ENCODE measurements at regions of chr18 and their contacts with region 1.

Region 1: GRCh38 chr18:70205421-70206397 is at the start of gene RTTN:
- DNase-seq: peak; percentile 88
- H3K4me3 ChIP-seq: peak within 1 kb of the TSS; percentile 82
- H3K27ac ChIP-seq: peak within 1 kb of the TSS; percentile 77
- H3K4me1 ChIP-seq: peaks cover 12% of the 10 kb centered on the region
- CTCF ChIP-seq: no peak
- total RNA-seq, gene RTTN: 20.5 and 29.7 TPM in 2 replicates

Region 2: DNA sequence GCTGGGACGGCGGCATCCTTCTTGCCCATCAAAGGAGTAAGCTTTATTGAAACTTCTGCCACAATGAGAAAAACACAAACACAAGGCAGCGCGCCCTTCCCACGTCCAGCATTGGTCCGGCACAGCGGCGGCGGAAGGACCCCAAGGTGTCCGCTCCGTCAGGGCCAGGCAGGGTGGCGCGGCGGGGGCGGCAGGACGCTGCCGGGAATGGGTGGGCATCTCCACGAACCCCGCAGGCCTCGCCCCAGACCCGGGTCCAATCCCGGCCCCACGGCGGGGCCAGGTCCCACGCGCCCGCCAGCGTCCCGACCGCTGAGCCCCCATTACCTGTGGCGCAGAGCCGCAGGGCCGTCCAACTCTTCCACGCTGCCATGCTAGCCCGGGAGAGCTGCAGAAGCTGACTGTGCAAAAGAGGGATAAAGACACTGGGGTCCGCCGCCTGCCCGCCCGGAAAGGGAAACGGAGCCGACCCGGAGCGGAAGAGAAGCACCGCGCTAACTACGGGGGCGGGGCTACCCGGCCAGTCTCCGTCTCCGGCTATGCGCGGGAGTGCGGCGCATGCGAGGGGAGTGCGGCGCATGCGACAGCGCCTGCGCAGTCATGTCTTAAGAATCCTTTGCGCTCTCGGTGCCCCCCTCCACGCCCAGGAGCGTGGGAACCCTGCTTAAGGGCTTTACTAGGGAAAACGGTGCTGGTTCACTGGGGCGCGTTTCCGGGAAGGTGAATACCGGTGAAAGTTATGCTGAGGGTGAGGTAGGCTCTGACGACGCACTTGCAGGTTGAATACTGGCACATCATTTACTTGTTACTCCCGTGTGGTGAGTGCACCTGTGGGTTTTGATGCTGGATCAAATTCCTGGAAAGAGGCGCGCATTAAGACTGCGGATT is 1490.9 kb before region 1 on chr18 and contains the start of gene TMX3:
- CTCF ChIA-PET with region 1: no interaction called
- POLR2A ChIA-PET with region 1: no interaction called
- intact Hi-C with region 1: loop called (anchors 10 kb)
- DNase-seq: peak; percentile 86
- H3K4me3 ChIP-seq: peak within 1 kb of the TSS; percentile 90
- H3K27ac ChIP-seq: peak within 1 kb of the TSS; percentile 43
- H3K4me1 ChIP-seq: peaks cover 16% of the 10 kb centered on the region
- CTCF ChIP-seq: no peak
- total RNA-seq, gene TMX3: 14.8 and 16.6 TPM in 2 replicates

Region 3: DNA sequence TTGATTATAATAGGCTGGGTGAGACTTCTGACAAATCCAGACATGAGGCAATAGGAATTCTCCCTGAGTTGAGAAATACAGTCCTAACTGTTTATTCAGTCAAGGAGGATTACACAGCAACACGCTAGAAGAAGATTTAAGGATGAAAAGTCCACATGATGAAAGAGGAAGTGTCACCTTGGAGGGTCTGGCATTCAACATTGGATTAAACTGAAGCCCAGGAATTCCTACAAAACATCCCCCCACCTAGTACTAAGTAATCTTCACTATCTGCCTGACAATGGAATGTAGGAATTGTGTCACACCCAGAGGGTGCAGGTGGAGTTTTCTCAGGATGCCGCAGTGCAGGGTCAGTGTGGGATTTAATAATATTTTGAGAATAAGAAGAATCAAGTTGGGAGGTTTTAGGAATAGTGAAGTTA is 225.5 kb after region 1 on chr18:
- CTCF ChIA-PET with region 1: no interaction called
- POLR2A ChIA-PET with region 1: no interaction called
- intact Hi-C with region 1: loop called (anchors 10 kb)
- DNase-seq: no peak
- H3K4me3 ChIP-seq: no peak overlapping the region
- H3K27ac ChIP-seq: no peak overlapping the region
- H3K4me1 ChIP-seq: no peaks in the 10 kb centered on the region
- CTCF ChIP-seq: no peak

Measured in OCI-LY7 (cell line).